ENCODE measurements at regions of chr19 and their contacts with region 1.

Region 1: DNA sequence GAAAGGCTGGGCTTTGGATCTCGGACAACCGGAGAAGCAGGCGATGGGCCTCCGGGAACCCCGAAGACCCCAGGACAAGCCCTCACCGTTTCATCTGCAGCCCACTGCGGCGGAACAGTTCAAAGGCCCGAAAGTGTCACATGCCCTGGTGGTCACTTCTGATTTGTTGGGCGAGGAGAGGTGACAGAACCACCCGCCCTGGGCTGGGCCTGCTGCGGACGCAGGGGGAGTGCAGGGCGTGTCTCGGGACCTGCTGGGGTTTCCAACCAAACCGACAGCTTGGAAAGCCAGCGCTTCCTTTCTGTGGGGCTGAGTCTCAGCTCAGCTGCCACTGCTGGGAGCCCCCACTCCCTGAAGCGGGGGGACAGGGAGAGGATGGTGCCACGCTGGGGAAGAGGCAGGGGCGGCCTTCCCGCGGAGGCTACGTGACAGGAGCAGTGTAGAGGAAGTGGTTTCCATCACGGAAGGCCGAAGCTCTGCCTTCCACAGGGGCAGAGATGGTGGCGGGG is 22.8 kb upstream of the ZBTB7A start:
- DNase-seq: peak; percentile 88
- ATAC-seq: peak; percentile 84
- H3K4me3 Mint-ChIP-seq: peak overlapping the region; percentile 75
- H3K27ac Mint-ChIP-seq: peak overlapping the region; percentile 92
- H3K4me1 Mint-ChIP-seq: peaks cover 54% of the 10 kb centered on the region
- H3K27me3 Mint-ChIP-seq: no peaks in the 10 kb centered on the region
- CTCF ChIP-seq: no peak

Region 2: GRCh38 chr19:4108767-4109625 is 19.5 kb after region 1 on chr19:
- CTCF ChIA-PET with region 1: interaction called, 4 read pairs
- POLR2A ChIA-PET with region 1: interaction called, 20 read pairs
- intact Hi-C with region 1: no loop called
- DNase-seq: peak; percentile 88
- ATAC-seq: peak; percentile 61
- H3K4me3 Mint-ChIP-seq: peak overlapping the region; percentile 57
- H3K27ac Mint-ChIP-seq: peak overlapping the region; percentile 94
- H3K4me1 Mint-ChIP-seq: peaks cover 59% of the 10 kb centered on the region
- H3K27me3 Mint-ChIP-seq: no peaks in the 10 kb centered on the region
- CTCF ChIP-seq: no peak

Region 3: GRCh38 chr19:4120933-4121612 is 31.6 kb after region 1 on chr19:
- CTCF ChIA-PET with region 1: no interaction called
- POLR2A ChIA-PET with region 1: no interaction called
- intact Hi-C with region 1: no loop called
- DNase-seq: no peak
- ATAC-seq: no peak
- H3K4me3 Mint-ChIP-seq: no peak overlapping the region
- H3K27ac Mint-ChIP-seq: peak overlapping the region; percentile 22
- H3K4me1 Mint-ChIP-seq: peaks cover 23% of the 10 kb centered on the region
- H3K27me3 Mint-ChIP-seq: no peaks in the 10 kb centered on the region
- CTCF ChIP-seq: no peak

Measured in activated CD8-positive, alpha-beta T cell treated with anti-CD3 and anti-CD28 coated beads for 36 hours (primary cell).